ENCODE measurements at regions of chr1 and their contacts with region 1.

Region 1: GRCh38 chr1:44377925-44378784 is 23.1 kb upstream of the ERI3 start:
- DNase-seq: peak; percentile 61
- H3K4me3 ChIP-seq: no peak overlapping the region
- H3K27ac ChIP-seq: no peak overlapping the region
- H3K4me1 ChIP-seq: no peaks in the 10 kb centered on the region
- H3K27me3 ChIP-seq: peaks cover 3 to 14% of the 10 kb centered on the region in 2 experiments
- CTCF ChIP-seq: peak; percentile 79 to 81
- POLR2A ChIP-seq: no peak

Region 2: DNA sequence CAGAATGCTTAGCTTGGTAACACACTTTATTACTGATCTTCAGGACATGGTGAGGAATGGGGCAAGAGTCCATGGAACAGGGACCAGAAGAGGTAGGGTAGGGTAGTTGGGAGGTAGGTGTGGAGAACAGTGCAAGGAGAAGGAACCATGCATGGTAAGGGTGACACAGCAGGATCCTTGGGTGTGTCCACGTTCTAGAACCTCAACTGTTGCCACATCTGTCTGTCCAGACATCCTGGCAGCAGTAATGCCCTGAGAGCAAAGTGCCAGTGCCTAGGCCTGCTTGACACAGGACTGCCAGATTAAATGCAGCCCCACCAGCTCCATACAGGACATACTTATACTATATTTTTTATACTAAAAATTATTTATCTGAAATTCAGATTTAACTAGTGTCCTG is 150.9 kb before region 1 on chr1:
- CTCF ChIA-PET with region 1: no interaction called
- POLR2A ChIA-PET with region 1: no interaction called
- dilution Hi-C with region 1: no loop called
- intact Hi-C with region 1: no loop called
- DNase-seq: no peak
- H3K4me3 ChIP-seq: no peak overlapping the region
- H3K27ac ChIP-seq: no peak overlapping the region
- H3K4me1 ChIP-seq: no peaks in the 10 kb centered on the region
- H3K27me3 ChIP-seq: no peaks in the 10 kb centered on the region
- CTCF ChIP-seq: no peak
- POLR2A ChIP-seq: no peak

Region 3: GRCh38 chr1:44251989-44252671 is 126.0 kb before region 1 on chr1:
- CTCF ChIA-PET with region 1: no interaction called
- POLR2A ChIA-PET with region 1: no interaction called
- dilution Hi-C with region 1: no loop called
- intact Hi-C with region 1: no loop called
- DNase-seq: no peak
- H3K4me3 ChIP-seq: no peak overlapping the region
- H3K27ac ChIP-seq: no peak overlapping the region
- H3K4me1 ChIP-seq: no peaks in the 10 kb centered on the region
- H3K27me3 ChIP-seq: no peaks in the 10 kb centered on the region
- CTCF ChIP-seq: no peak
- POLR2A ChIP-seq: no peak

Region 4: DNA sequence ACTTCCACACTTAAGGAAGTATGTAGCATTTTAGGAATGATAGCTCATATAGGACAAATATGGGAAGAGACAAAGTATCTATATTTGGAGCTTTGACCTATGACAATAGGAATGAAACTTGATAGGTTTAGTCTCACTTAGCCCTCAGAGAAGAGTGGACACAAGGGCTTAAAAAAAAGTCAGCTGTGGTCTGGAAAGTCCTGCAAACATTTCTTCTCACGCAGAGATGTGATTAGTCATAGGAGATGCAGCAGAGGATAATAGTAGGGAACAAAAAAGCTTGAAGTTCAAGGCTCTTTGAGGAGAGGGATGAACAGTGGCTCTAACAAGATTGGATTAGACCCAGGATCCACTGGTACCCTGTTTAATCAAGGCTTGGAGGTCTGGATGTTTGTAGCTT is 12.1 kb after region 1 on chr1:
- CTCF ChIA-PET with region 1: interaction called, 21 read pairs
- POLR2A ChIA-PET with region 1: interaction called, 5 read pairs
- dilution Hi-C with region 1: no loop called
- intact Hi-C with region 1: no loop called
- DNase-seq: no peak
- H3K4me3 ChIP-seq: no peak overlapping the region
- H3K27ac ChIP-seq: no peak overlapping the region
- H3K4me1 ChIP-seq: no peaks in the 10 kb centered on the region
- H3K27me3 ChIP-seq: peaks cover 22 to 35% of the 10 kb centered on the region in 2 experiments
- CTCF ChIP-seq: no peak
- POLR2A ChIP-seq: no peak

Region 5: GRCh38 chr1:44437107-44437716 is 59.1 kb after region 1 on chr1:
- CTCF ChIA-PET with region 1: interaction called, 13 read pairs
- POLR2A ChIA-PET with region 1: no interaction called
- dilution Hi-C with region 1: no loop called
- intact Hi-C with region 1: no loop called
- DNase-seq: no peak
- H3K4me3 ChIP-seq: no peak overlapping the region
- H3K27ac ChIP-seq: no peak overlapping the region
- H3K4me1 ChIP-seq: peaks cover 7% of the 10 kb centered on the region
- H3K27me3 ChIP-seq: peaks cover 6 to 7% of the 10 kb centered on the region in 2 experiments
- CTCF ChIP-seq: no peak
- POLR2A ChIP-seq: no peak

Region 6: DNA sequence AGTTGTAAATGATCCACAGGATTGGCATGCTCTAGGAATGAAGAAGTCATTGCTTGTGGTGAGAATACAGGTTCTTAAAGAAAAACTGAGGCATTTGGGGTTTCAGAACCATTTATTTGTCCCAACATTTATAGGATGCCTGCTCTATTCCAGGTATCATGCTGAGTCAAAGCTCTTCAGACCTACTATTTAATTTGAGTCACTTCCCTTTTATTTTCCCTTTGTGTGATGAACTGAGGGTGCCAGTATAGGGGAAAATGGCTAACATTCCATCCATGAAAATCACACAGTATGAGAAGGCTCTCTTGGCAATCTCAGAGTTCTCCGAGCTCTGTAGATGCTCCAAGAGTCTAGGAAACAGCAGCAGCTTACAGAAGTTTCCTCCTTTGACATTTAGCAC is 137.3 kb after region 1 on chr1:
- CTCF ChIA-PET with region 1: interaction called, 11 read pairs
- POLR2A ChIA-PET with region 1: no interaction called
- dilution Hi-C with region 1: no loop called
- intact Hi-C with region 1: no loop called
- DNase-seq: no peak
- H3K4me3 ChIP-seq: no peak overlapping the region
- H3K27ac ChIP-seq: no peak overlapping the region
- H3K4me1 ChIP-seq: no peaks in the 10 kb centered on the region
- H3K27me3 ChIP-seq: peaks cover 34 to 35% of the 10 kb centered on the region in 2 experiments
- CTCF ChIP-seq: no peak
- POLR2A ChIP-seq: no peak

Region 7: GRCh38 chr1:44566281-44567046 is 188.3 kb after region 1 on chr1:
- CTCF ChIA-PET with region 1: interaction called, 25 read pairs
- POLR2A ChIA-PET with region 1: no interaction called
- dilution Hi-C with region 1: no loop called
- intact Hi-C with region 1: no loop called
- DNase-seq: no peak
- H3K4me3 ChIP-seq: no peak overlapping the region
- H3K27ac ChIP-seq: no peak overlapping the region
- H3K4me1 ChIP-seq: no peaks in the 10 kb centered on the region
- H3K27me3 ChIP-seq: peaks cover 2 to 10% of the 10 kb centered on the region in 2 experiments
- CTCF ChIP-seq: no peak
- POLR2A ChIP-seq: no peak

Region 8: DNA sequence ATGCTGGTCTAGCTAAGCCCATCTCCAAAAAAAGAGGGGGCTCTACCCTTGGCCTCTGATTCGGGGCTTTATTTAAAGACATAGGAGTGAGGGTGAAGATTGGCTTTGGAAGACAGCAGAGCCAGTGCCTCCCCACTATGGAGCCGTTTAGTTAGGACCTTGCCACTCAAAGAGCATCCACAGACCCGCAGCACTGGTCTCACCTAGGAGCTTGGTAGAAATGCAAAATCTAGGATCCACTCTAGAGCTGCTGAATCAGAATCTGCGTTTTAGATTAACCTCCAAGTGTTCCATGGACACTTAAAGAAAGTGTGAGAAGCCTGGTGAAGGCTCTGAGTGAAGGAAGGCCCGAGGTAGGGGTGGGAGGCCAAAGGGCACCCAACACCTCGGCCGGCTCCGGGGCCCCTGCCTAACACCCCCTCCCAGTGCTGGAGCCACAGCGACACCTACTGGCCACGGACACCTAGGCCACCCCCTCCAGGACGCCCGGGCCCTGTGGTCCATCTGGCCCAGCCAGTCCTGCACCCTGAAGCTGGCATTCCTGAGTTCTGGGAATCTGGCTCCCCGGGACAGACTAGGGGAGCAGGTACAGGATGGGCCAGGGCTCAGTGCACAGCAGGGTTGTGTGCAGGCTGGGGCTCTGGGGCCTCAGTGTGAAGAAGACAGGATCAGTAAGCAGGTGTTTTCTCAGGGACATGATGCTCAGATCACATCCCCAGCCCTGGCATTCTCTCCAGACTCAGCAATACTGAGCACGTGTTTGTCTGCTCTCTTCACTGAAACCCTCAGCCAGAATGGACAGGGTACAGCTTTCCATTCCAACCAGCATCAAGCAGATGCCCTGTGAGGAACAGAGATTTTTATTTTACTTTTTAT is 217.0 kb after region 1 on chr1:
- CTCF ChIA-PET with region 1: interaction called, 398 read pairs
- POLR2A ChIA-PET with region 1: no interaction called
- dilution Hi-C with region 1: no loop called
- intact Hi-C with region 1: loop called (anchors 1 kb)
- DNase-seq: peak; percentile 42
- H3K4me3 ChIP-seq: no peak overlapping the region
- H3K27ac ChIP-seq: no peak overlapping the region
- H3K4me1 ChIP-seq: no peaks in the 10 kb centered on the region
- H3K27me3 ChIP-seq: peaks cover 0 to 7% of the 10 kb centered on the region in 2 experiments
- CTCF ChIP-seq: peak; percentile 86 to 94
- POLR2A ChIP-seq: no peak